ENCODE measurements at regions of chr17 and their contacts with region 1.

Region 1: DNA sequence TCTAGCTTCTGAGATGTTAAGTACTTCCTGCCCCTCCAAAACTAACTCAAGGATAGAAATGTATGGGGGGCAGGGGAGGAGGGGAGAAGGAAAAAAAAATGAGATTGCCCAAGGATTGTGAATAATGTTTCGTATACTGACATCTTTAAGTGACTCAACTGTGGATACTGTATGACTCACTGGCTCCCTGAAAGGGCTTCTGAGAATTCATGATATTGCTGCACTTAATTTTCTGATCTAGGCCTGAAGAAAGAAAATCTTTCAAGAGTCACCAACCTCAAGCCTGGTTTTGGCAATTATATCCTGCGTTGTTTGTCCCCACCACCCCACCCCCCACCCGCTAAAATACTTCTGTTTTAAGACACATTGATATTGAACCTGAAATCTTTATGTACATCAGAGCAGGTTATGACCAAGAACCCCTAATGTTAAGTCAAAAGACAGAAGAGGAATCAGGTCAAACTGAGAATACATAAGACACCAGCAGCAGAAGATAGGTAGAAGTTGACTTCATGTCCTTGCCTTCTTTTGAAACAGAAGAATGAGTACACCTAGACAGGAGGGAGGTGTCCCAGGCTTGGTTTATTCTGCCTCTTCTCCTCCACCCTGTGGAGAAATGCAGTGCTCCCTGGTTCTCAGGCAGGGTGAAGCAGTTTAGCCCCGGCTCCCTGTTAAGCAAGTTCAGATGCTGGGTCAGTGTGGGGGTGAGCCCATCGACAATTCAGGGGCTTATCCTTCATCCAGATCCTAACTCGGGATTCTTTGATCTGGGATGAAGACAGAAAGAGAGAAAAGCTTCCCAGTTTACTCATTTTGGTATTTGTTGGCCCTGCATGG is 3.3 kb upstream of the FBXL20 start:
- DNase-seq: no peak
- H3K4me3 Mint-ChIP-seq: peak overlapping the region; percentile 17
- H3K27ac Mint-ChIP-seq: peak overlapping the region; percentile 84
- H3K4me1 Mint-ChIP-seq: peaks cover 42% of the 10 kb centered on the region
- H3K27me3 Mint-ChIP-seq: no peaks in the 10 kb centered on the region

Region 2: GRCh38 chr17:39364626-39365025 is 40.1 kb before region 1 on chr17:
- intact Hi-C with region 1: no loop called
- DNase-seq: no peak
- H3K4me3 Mint-ChIP-seq: no peak overlapping the region
- H3K27ac Mint-ChIP-seq: no peak overlapping the region
- H3K4me1 Mint-ChIP-seq: no peaks in the 10 kb centered on the region
- H3K27me3 Mint-ChIP-seq: no peaks in the 10 kb centered on the region

Region 3: GRCh38 chr17:39450847-39451581 is 46.3 kb after region 1 on chr17 and contains the start of gene MED1:
- intact Hi-C with region 1: loop called (anchors 2 kb)
- DNase-seq: peak; percentile 92
- H3K4me3 Mint-ChIP-seq: peak within 1 kb of the TSS; percentile 97
- H3K27ac Mint-ChIP-seq: peak within 1 kb of the TSS; percentile 96
- H3K4me1 Mint-ChIP-seq: peaks cover 14% of the 10 kb centered on the region
- H3K27me3 Mint-ChIP-seq: no peaks in the 10 kb centered on the region
- total RNA-seq, gene MED1: 63.7 and 64.1 TPM in 2 replicates

Region 4: DNA sequence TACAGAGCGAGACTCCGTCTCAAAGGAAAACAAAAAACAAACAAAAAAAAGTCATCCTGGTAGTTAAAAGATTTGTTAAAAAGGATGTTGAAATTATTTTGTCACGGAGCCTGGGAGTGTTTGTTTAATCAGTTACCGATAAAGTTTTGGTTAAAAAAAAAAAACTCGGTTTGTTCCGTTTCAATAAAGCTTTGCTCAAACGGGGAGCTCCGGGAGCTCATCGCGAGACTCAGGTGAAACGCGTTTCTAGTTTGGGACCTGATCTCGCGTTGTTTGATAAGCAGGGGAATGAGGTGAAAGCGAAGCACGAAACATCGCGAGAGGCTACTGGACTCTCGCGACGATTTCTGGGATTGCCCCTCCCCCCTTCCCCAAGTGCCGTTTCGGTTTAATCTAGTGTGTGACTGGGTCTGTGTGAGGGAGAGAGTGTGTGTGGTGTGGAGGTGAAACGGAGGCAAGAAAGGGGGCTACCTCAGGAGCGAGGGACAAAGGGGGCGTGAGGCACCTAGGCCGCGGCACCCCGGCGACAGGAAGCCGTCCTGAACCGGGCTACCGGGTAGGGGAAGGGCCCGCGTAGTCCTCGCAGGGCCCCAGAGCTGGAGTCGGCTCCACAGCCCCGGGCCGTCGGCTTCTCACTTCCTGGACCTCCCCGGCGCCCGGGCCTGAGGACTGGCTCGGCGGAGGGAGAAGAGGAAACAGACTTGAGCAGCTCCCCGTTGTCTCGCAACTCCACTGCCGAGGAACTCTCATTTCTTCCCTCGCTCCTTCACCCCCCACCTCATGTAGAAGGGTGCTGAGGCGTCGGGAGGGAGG is 56.6 kb after region 1 on chr17 and contains the start of gene CDK12:
- intact Hi-C with region 1: loop called (anchors 2 kb)
- DNase-seq: peak; percentile 94
- H3K4me3 Mint-ChIP-seq: peak within 1 kb of the TSS; percentile 96
- H3K27ac Mint-ChIP-seq: peak within 1 kb of the TSS; percentile 99
- H3K4me1 Mint-ChIP-seq: peaks cover 17% of the 10 kb centered on the region
- H3K27me3 Mint-ChIP-seq: no peaks in the 10 kb centered on the region
- total RNA-seq, gene CDK12: 83.9 TPM in 2 replicates